Heart left ventricle (tissue), 16 donors: ENCODE measurements at regions of chr14 and their contacts with region 1.

Region 1: DNA sequence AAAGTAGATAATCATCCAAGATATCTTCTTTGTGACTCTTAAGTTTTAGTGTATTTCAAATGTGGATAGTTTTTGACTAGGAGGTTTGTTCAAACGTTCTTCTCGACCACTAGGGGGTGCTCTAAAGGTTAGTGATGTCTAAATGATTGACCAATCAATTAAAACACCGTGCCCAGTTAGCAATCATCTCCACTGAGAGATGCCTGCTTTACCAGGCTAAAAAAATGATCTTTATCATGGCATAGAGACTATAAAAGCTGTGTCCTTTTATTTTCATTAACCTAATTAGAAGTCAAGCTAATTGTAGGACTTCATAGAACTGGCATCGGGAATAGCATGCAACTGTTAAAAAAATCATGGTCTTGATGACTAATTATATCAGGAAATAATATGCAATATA is 153.9 kb downstream of the PRKCH start:
- DNase-seq: no peak
- ATAC-seq: no peak
- H3K4me3 ChIP-seq: no peak overlapping the region
- H3K27ac ChIP-seq: peak overlapping the region in 11 of 12 donors; percentile 72 to 99 (median 90)
- H3K4me1 ChIP-seq: peaks cover 28 to 99% (median 81%) of the 10 kb centered on the region in 12 donors
- H3K27me3 ChIP-seq: no peaks in the 10 kb centered on the region
- CTCF ChIP-seq: peak; percentile 61 to 81 (median 76)
- POLR2A ChIP-seq: no peak

Region 2: DNA sequence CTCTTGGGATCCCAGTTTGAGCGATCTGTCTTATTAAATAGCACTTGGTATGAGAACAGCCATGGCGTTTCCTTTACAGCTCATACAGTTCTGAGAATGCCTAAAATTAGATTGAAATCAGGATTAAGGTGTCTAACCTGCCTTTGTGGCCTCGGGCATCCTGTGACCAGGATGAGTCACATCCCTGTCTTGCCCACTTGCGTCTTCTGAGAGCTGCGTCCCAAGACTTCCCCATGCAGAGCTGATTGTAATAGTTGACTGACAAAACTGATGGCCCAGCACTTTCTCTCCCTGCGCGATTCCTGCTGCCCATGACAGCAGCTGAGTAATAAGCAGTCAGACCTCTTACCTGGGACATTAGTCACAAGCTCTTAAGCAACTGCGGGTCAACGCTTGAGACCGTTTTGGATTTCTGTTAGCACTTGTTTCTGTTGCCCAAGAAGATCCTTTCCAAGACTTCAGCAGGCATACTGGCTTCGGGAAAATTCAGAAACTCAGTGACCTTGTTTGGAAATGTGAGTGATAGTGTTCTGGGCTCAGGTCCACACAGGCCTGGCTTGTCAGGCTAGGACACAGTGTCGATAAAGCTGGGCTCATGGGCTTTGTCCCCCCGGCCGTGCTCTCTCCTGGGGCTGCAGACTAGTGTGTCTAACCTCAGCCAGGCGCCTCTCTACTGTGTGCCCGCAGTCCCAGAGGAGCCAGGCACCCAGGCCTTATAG is 50.1 kb after region 1 on chr14:
- intact Hi-C with region 1: loop called in 5 of 10 experiments (anchors 2 to 10 kb)
- DNase-seq: peak; percentile 51 to 74 (median 67)
- ATAC-seq: peak; percentile 61 to 86 (median 83)
- H3K4me3 ChIP-seq: no peak overlapping the region
- H3K27ac ChIP-seq: peak overlapping the region; percentile 68 to 88 (median 76)
- H3K4me1 ChIP-seq: peaks cover 0 to 57% (median 45%) of the 10 kb centered on the region in 12 donors
- H3K27me3 ChIP-seq: no peaks in the 10 kb centered on the region
- CTCF ChIP-seq: no peak
- POLR2A ChIP-seq: no peak

Region 3: GRCh38 chr14:61547186-61548086 is 72.1 kb after region 1 on chr14:
- intact Hi-C with region 1: loop called in 2 of 10 experiments (anchors 5 to 10 kb)
- DNase-seq: peak in 1 of 5 donors; percentile 40
- ATAC-seq: peak in 1 of 4 donors; percentile 32
- H3K4me3 ChIP-seq: no peak overlapping the region
- H3K27ac ChIP-seq: peak overlapping the region in 4 of 12 donors; percentile 1 to 48 (median 43)
- H3K4me1 ChIP-seq: peaks cover 6 to 84% (median 47%) of the 10 kb centered on the region in 12 donors
- H3K27me3 ChIP-seq: no peaks in the 10 kb centered on the region
- CTCF ChIP-seq: no peak
- POLR2A ChIP-seq: no peak

Region 4: DNA sequence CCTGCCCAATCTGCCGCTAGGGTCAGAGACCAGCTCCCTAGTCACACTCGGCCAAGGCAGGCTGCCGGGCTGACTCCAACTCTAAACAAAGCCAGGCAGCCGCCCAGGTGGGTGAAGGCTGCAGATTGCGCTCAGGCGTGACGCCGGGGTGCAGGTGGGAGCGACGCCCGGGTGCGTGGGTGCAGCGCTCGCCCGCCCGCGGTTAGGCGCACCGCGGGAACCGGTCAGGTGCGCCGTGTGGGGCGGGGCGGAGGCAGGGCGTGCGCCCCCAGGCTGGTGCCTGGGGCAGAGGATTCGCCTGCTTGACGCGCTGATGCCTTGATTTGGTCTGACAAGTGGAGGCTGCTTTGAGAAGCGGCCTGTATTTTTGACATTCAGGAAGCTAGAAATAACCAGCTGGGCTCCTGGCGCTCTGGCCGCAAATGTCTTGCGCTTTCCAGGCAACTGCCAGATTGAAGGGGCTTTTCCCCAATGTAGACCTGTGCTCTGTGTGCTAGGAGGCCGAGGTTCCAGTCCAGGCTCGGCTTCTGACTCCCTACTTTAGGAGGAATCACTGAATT is 93.3 kb after region 1 on chr14:
- intact Hi-C with region 1: loop called in 6 of 10 experiments (anchors 5 to 10 kb)
- DNase-seq: peak in 3 of 5 donors; percentile 48 to 75 (median 58)
- ATAC-seq: peak; percentile 30 to 76 (median 55)
- H3K4me3 ChIP-seq: peak overlapping the region in 10 of 12 donors; percentile 11 to 45 (median 33)
- H3K27ac ChIP-seq: peak overlapping the region; percentile 56 to 87 (median 74)
- H3K4me1 ChIP-seq: peaks cover 6 to 91% (median 36%) of the 10 kb centered on the region in 12 donors
- H3K27me3 ChIP-seq: no peaks in the 10 kb centered on the region
- CTCF ChIP-seq: peak in 6 of 12 donors; percentile 4 to 25 (median 9)
- POLR2A ChIP-seq: no peak

Region 5: DNA sequence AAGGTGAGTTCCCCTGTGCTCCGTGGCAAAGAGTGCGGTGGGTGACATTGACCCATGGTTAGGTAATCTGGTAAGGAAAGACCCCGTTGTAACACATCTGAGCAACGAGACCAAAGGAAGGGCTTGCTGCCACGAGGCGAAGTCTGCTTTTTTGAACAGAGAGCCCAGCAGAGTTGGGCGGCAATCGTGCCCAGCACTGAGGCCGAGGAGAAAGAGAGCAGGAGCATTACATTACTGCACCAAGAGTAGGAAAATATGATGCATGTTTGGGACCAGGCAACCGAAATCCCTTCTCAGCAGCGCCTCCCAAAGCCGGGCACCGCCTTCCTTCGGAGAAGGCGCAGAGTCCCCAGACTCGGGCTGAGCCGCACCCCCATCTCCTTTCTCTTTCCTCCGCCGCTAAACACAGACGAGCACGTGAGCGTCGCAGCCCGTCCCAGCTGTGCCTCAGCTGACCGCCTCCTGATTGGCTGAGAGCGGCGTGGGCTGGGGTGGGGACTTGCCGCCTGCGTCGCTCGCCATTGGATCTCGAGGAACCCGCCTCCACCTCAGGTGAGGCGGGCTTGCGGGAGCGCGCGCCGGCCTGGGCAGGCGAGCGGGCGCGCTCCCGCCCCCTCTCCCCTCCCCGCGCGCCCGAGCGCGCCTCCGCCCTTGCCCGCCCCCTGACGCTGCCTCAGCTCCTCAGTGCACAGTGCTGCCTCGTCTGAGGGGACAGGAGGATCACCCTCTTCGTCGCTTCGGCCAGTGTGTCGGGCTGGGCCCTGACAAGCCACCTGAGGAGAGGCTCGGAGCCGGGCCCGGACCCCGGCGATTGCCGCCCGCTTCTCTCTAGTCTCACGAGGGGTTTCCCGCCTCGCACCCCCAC is 219.7 kb after region 1 on chr14 and contains the start of gene HIF1A:
- intact Hi-C with region 1: loop called in 4 of 10 experiments (anchors 2 to 5 kb)
- DNase-seq: peak; percentile 97 to 99 (median 98)
- ATAC-seq: peak; percentile 97 to 99 (median 98)
- H3K4me3 ChIP-seq: peak within 1 kb of the TSS; percentile 65 to 95 (median 89)
- H3K27ac ChIP-seq: peak within 1 kb of the TSS; percentile 93 to 99 (median 97)
- H3K4me1 ChIP-seq: peaks cover 0 to 39% (median 23%) of the 10 kb centered on the region in 12 donors
- H3K27me3 ChIP-seq: no peaks in the 10 kb centered on the region
- CTCF ChIP-seq: peak in 2 of 12 donors; percentile 23 to 24
- POLR2A ChIP-seq: peak; percentile 92 to 95
- total RNA-seq, gene HIF1A: 52.4 to 157 (median 72.8) TPM